ENCODE measurements at regions of chr3 and their contacts with region 1.

Region 1: DNA sequence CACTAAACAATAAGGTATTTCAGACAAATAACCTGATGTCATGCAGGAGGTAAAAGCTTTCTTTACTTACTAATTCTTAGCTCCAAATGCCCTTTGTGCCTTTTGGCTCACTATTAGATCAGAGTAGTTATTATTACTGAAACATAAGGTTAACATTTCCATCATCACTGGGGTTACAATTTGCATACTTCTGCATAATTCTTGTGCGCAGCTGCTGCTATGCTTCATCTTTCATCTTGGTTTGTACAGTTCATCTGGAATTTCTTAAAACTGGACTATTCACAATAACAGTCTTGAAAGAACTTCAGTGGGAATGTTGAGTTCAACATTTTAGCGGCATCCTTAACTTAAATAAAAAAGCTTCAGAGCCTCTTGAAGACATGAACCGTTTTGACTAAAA is 383.2 kb upstream of the ADAMTS9 start:
- DNase-seq: no peak

Region 2: DNA sequence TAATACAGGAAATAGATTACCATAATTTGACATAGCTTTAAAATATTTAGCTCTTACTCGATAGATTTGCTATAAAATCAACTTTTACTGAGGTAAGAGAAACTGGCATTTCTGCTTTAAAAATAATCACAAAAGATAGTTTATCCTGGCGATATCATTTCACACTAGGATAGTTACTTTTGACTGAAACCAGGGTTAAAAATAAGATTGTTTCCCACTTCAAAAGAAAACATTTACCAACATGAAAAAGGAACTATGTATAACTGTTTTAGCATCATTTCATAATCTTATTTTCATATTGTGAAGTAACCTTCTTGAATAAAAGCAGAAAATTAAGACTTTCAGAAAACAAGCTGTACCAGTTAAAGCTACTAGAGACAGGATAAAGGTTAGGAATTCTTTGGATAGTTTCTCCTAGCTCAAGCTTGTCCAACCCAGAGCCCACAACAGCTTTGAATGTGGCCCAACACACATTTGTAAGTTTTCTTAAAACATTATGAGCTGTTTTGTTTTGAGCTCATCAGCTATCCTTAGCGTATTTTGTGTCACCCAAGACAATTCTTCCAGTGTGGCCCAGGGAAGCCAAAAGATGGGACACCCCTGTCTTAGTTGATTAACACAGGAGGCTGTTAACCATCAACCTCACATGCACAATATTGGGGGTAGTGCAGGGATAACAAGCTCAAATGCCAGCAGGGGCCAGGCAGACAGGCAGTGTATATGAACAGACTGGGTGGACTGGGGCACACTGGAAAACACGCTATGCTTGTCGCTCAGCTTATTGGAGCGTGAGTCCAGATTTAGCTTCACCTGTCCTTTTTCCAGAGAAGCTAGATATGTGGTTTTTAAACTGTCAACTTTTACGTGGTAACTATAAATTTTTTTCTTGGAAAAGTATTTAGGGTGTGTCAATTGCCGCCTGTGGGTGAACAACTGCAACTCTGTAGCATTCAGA is 1062.7 kb before region 1 on chr3:
- intact Hi-C with region 1: no loop called
- DNase-seq: no peak

Region 3: DNA sequence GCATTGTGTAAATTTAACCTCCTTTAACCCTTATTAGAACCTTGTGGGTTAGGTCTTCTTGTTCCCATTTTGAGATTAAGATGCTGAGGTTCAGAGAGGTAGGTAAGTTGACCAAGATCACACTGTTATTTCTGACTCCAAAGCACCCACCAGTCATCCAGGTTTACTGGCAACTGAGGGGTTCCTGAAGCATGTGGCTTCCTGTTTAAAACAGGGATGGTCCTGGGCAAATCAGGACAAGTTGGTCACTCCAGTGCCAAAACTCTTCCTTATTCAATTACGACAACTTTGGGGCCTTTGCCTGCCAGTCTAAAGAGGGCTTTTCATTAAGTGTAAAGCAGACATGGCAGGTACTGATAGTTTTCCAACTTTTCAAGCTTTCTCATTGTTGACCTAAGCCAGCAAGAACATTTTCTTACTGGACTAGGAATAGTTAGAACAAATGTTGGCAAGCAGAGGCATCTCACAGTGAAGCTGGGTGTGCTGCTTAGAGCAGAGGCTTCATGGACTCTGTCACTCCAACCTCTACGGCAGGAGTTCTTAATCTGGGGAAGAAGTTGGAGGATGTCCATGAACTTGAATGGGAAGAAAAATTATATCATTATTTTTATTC is 233.7 kb before region 1 on chr3:
- intact Hi-C with region 1: no loop called
- DNase-seq: no peak

Region 4: GRCh38 chr3:65039754-65040210 is 31.2 kb before region 1 on chr3:
- intact Hi-C with region 1: loop called in 1 of 2 experiments (anchors 1 kb)
- DNase-seq: no peak

Region 5: DNA sequence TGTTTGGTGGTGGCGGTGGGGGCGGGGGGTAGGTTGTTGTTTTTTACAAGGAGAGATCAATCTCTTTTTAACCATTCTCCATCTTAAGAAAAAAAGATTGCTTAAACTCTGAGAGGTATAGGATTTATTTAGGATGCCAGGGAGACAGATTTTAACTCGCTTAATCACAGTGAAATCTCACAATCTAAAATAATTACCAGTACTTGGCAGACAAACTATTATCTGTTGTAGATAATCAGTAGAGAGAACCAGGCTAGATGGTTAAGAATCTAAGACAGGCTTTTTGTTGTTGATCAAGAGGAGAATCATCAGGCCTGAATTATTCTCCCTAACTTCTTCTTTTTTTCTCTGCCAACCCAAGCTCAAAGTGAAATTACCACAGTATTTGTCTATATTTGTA is 87.1 kb after region 1 on chr3:
- intact Hi-C with region 1: loop called in 1 of 2 experiments (anchors 5 kb)
- DNase-seq: no peak